ENCODE measurements at regions of chr6 and their contacts with region 1.

Region 1: GRCh38 chr6:30828027-30828960 is 56.0 kb upstream of the DDR1 start:
- DNase-seq: peak; percentile 94

Region 2: DNA sequence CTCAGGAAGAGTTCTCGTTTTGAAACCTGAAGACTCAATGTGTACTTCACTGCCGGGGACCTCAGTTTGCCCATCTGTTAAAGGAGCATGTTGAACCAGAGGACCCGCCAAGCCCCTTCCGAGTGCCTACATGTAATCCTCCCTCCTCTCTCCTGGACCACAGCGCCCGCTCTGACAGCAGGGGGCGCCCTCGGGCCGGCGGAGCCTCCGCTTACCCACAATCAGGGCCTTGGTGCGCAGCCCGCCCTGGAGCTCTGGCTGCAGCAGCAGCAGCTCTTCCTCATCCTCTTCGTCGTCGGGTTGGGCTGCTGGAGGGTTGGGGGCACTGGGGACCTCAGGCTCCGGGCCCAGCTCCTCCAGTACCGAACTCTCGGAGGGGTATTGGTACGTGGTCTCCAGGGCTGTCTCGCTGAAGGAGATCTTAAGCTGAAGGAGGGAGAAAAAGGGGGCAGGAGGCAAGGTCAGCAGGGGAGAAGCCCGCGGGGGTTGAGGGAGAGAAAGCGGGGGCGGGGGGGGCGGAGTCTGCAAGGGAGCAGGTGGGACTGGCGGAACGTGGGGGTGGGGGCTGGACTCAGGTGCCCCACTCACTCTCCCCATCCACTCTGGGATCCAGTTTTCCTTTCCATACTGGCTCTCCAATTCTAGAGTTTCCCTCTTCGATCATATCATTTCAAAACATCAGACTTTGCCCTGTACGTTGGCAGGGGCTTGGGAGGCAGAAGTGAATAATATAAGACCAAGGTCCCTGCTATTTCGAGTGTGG is 149.1 kb before region 1 on chr6:
- intact Hi-C with region 1: loop called (anchors 5 kb)
- DNase-seq: peak; percentile 96

Region 3: DNA sequence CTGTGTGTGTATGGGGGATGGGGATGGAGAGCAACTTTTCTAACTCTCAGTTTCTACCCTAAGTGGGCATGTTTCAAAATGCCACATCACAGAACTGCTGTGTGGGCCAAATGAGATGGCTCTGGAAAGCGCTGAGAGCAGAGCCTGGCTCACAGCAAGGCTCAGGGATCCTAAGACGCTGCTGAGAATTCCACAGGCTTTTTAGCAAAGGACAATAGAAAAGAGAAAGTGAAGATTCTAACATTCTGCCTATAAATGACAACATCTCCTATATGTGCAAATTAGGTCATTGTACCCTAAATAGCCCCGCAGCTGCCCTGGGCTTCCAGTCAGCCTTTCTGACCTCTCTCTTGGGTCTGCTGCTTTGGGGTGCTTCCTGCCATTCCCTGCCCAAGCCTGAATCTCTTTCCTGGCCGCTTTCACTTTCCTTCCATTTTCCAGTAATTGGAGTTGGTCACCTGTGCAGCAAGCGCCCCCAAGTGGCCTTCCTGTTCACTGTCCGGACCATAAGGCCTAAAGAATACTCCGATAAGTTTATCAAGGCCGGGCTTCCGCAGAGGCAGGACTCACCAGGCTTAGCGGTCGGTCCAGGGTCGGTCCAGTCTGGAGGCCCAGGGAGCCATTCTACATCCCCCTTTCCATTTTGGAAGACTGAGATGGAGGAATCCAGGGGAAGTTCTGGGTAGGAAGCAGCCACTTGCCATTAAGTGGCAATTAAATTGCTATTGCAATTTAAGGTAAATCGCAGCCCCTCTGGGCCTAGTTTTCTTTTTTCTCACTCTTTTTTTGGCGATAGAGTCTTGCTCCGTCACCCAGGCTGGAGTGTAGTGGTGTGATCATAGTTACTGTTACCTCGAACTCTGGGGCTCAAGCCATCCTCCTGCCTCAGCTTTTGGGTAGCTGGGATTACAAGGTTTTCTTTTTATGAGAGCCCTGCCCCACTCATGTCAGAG is 49.4 kb after region 1 on chr6:
- intact Hi-C with region 1: loop called (anchors 1 kb)
- DNase-seq: peak; percentile 91

Region 4: DNA sequence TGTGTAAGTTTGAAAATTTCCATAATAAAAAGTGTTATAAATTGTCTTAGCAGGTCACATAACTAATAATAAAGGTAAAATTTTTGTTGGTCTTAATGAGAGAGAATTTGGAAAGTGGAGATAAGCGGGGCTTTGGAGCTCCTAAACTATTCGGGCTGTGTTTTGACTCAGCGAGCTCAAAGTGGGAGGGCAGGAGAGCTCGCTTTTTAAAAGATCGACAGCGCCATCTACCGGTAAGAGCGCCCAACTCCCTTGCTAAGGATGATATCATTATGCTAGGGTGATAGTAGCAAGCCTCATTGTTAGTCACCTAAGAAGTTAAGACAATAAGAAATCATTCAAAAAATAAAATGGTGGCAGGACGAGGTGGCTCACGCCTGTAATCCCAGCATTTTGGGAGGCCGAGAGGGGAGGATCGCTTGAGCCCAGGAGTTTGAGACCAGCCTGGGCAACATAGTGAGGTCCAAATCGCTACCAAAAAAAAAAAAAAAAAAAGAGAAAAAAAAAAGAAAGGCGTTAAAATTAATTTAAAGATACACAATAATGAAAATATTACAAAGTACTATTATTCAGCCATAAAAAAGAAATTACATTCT is 259.3 kb after region 1 on chr6:
- intact Hi-C with region 1: loop called (anchors 5 kb)
- DNase-seq: peak; percentile 90